ENCODE measurements at regions of chr2 and their contacts with region 1.

Region 1: DNA sequence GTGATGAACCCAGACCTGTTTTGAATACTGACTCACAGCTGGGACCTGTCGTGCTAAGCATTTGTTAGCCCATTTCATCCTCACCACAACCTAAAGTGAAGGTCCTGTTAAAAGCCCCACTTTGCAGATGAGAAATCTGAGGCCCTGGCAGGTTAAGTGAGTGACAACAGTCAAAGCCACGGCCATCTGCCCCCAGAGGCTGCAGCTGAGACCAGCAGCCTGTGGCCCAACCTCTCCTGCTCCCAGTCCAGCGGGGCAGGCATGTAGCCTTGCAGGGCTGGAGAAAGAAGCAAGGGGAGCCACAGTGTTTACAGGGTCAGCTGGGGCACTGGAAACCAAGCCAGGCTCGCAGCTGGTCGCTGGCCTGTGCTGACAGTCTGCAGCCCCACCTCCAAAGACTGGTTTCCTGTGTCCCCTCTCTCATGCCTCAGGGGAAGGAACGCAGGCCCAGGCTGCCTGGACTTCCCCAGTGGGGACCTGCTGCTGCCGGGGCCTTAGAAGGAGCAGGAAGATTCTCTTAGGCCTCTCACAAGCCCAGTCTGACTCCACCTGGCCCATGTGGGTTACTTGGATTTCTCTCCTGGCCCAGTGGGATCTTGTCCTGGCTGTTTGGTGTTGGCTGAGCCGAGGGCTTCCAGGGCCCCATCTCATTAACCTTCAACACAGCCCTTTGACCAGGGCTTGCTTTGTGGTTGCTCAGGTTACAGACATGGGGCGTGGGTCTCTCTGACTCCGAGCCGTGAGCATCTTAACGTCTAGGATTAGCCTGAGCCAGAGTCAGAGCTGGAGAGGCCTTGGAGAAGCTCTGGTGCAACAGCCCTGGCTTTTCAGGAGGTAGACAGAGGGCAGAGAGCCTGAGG is 1.7 kb downstream of the INPP5D start:
- DNase-seq: peak in 1 of 9 donors; percentile 41
- ATAC-seq: peak; percentile 32
- H3K4me3 ChIP-seq: peak overlapping the region; percentile 88
- H3K4me3 Mint-ChIP-seq: peak overlapping the region; percentile 86 to 98 (median 96)
- H3K27ac ChIP-seq: peak overlapping the region; percentile 85
- H3K27ac Mint-ChIP-seq: peak overlapping the region; percentile 90 to 99 (median 95)
- H3K4me1 ChIP-seq: peaks cover 33 to 41% of the 10 kb centered on the region in 2 donors
- H3K4me1 Mint-ChIP-seq: peaks cover 35 to 60% (median 48%) of the 10 kb centered on the region in 7 donors
- H3K27me3 ChIP-seq: no peaks in the 10 kb centered on the region
- H3K27me3 Mint-ChIP-seq: no peaks in the 10 kb centered on the region

Region 2: DNA sequence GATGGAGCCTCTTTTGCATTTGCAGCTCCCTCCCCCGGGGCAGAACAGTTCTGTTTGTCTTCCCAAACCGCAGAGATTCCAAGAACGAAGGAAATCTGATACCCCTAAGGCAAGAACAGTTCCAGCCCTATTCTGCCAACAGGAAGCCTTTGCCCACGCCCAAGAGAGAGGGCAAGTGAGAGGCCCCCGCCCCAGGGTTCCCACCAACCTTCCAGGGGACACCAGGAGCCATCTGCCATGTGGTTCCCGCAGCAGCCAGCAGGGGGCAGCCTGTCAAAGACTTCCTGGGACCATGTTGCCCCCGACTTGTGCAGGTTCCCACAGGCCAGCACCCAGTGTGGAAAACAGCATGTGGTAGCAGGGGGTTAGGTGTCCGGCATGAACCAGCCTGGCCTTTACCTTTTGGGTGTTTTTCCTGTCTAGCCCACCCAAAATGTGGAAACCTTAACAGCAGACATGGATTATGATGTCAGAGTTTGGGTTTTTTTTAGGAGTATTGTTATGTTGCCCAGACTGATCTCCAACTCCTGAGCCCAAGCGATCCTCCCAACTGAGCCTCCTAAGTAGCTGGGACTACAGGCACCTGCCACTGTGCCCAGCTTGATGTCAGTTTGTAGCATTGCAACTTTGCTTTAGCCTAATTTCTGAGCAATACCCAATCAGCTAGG is 450.1 kb before region 1 on chr2:
- CTCF ChIA-PET with region 1: no interaction called
- POLR2A ChIA-PET with region 1: no interaction called
- intact Hi-C with region 1: loop called (anchors 2 to 10 kb)
- DNase-seq: peak; percentile 18 to 72 (median 48)
- ATAC-seq: peak; percentile 72
- H3K4me3 ChIP-seq: no peak overlapping the region
- H3K4me3 Mint-ChIP-seq: no peak overlapping the region
- H3K27ac ChIP-seq: no peak overlapping the region
- H3K27ac Mint-ChIP-seq: no peak overlapping the region
- H3K4me1 ChIP-seq: no peaks in the 10 kb centered on the region
- H3K4me1 Mint-ChIP-seq: no peaks in the 10 kb centered on the region
- H3K27me3 ChIP-seq: no peaks in the 10 kb centered on the region
- H3K27me3 Mint-ChIP-seq: no peaks in the 10 kb centered on the region

Region 3: DNA sequence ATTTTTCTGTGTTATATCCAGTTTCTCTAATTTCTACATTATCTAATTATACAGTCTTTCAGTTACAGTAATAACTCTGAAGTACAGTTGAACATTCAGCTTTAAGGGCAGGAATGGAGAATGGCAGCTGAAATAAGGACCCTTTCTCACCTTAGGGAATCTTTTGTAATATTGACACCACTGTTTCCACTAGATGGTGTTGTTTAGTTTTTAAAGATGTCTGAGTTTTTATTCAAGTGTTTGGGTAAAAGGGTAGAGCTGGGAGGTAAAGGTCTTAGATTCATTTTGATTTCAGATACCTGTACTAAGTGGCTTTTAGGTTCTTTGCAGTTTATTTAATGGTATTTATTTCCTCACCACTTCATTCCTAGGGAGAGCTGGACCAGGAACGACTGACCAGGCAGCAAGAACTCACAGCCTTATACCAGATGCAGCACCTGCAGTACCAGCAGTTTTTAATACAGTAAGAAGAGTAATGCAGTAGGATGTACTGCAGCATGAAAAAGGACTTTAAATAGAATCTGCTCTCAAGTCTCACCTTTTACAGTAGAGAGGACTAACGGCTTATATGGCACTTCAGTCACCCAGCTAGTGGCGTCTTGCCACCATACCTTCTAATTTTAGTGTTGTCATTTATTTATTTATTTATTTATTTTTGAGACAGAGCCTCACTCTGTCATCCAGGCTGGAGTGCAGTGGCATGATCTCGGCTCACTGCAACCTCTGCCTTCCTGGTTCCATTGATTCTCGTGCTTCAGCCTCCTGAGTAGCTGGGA is 252.3 kb before region 1 on chr2:
- CTCF ChIA-PET with region 1: no interaction called
- POLR2A ChIA-PET with region 1: no interaction called
- intact Hi-C with region 1: no loop called
- DNase-seq: peak in 1 of 9 donors; percentile 5
- ATAC-seq: no peak
- H3K4me3 ChIP-seq: no peak overlapping the region
- H3K4me3 Mint-ChIP-seq: no peak overlapping the region
- H3K27ac ChIP-seq: no peak overlapping the region
- H3K27ac Mint-ChIP-seq: peak overlapping the region in 3 of 9 donors; percentile 2 to 53 (median 8)
- H3K4me1 ChIP-seq: no peaks in the 10 kb centered on the region
- H3K4me1 Mint-ChIP-seq: peaks cover 0 to 2% (median 0%) of the 10 kb centered on the region in 7 donors
- H3K27me3 ChIP-seq: no peaks in the 10 kb centered on the region
- H3K27me3 Mint-ChIP-seq: no peaks in the 10 kb centered on the region

Region 4: DNA sequence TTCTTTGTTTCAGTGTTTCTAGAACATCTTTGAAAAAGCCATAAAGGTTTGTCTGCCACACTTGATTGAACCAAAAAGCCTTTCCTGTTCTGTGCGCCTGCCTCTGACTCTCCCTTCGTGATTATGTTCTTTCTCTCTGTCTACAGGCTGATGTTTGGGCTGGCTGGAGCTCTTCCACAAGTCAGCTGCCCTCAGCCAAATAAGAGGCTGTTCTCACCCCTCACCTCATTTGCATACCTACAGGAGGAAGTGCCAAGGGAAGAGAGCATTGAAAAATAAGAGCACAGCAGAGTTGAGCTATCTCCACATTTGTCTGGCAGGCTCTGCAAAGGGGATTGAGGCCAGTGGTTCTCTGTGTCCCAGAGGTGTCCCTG is 14.1 kb after region 1 on chr2:
- CTCF ChIA-PET with region 1: interaction called, 20 read pairs
- POLR2A ChIA-PET with region 1: interaction called, 144 read pairs
- intact Hi-C with region 1: loop called (anchors 1 kb)
- DNase-seq: peak in 8 of 9 donors; percentile 25 to 74 (median 61)
- ATAC-seq: peak; percentile 80
- H3K4me3 ChIP-seq: peak overlapping the region; percentile 49
- H3K4me3 Mint-ChIP-seq: no peak overlapping the region
- H3K27ac ChIP-seq: peak overlapping the region; percentile 57
- H3K27ac Mint-ChIP-seq: no peak overlapping the region
- H3K4me1 ChIP-seq: peaks cover 78 to 83% of the 10 kb centered on the region in 2 donors
- H3K4me1 Mint-ChIP-seq: peaks cover 29 to 39% (median 35%) of the 10 kb centered on the region in 7 donors
- H3K27me3 ChIP-seq: no peaks in the 10 kb centered on the region
- H3K27me3 Mint-ChIP-seq: no peaks in the 10 kb centered on the region

Region 5: GRCh38 chr2:233114421-233114861 is 52.6 kb after region 1 on chr2:
- CTCF ChIA-PET with region 1: no interaction called
- POLR2A ChIA-PET with region 1: interaction called, 4 read pairs
- intact Hi-C with region 1: loop called in 1 of 2 experiments (anchors 2 kb)
- DNase-seq: peak in 6 of 9 donors; percentile 26 to 47 (median 34)
- ATAC-seq: peak; percentile 67
- H3K4me3 ChIP-seq: no peak overlapping the region
- H3K4me3 Mint-ChIP-seq: peak overlapping the region in 8 of 10 donors; percentile 37 to 75 (median 61)
- H3K27ac ChIP-seq: no peak overlapping the region
- H3K27ac Mint-ChIP-seq: peak overlapping the region in 8 of 9 donors; percentile 15 to 84 (median 72)
- H3K4me1 ChIP-seq: peaks cover 7 to 55% of the 10 kb centered on the region in 2 donors
- H3K4me1 Mint-ChIP-seq: peaks cover 49 to 91% (median 81%) of the 10 kb centered on the region in 7 donors
- H3K27me3 ChIP-seq: no peaks in the 10 kb centered on the region
- H3K27me3 Mint-ChIP-seq: no peaks in the 10 kb centered on the region

Measured in naive thymus-derived CD4-positive, alpha-beta T cell (primary cell).